Activated CD8-positive, alpha-beta memory T cell treated with anti-CD3 and anti-CD28 coated beads, Interleukin-2, amount 10 ng/mL, durations not matched to agents 7 days and 5 days (primary cell): ENCODE measurements at regions of chr1 and their contacts with region 1.

Region 1: GRCh38 chr1:6185635-6186382 is 5.7 kb upstream of the CHD5 start:
- DNase-seq: peak; percentile 56
- ATAC-seq: peak; percentile 47
- H3K4me3 Mint-ChIP-seq: no peak overlapping the region
- H3K27ac Mint-ChIP-seq: no peak overlapping the region
- H3K4me1 Mint-ChIP-seq: peaks cover 38% of the 10 kb centered on the region
- H3K27me3 Mint-ChIP-seq: peaks cover 15% of the 10 kb centered on the region

Region 2: GRCh38 chr1:6199298-6200187 is 13.7 kb after region 1 on chr1 and contains the start of gene RPL22:
- CTCF ChIA-PET with region 1: interaction called, 12 read pairs
- DNase-seq: peak; percentile 99
- ATAC-seq: peak; percentile 97
- H3K4me3 Mint-ChIP-seq: peak within 1 kb of the TSS; percentile 90
- H3K27ac Mint-ChIP-seq: peak within 1 kb of the TSS; percentile 80
- H3K4me1 Mint-ChIP-seq: peaks cover 38% of the 10 kb centered on the region
- H3K27me3 Mint-ChIP-seq: no peaks in the 10 kb centered on the region
- total RNA-seq, gene RPL22: 229 to 287 TPM